Dendritic cell treated with granulocyte-macrophage colony-stimulating factor and Interleukin-4, amounts not matched to agents 40 ng/mL and 50 ng/mL, for 4 days (primary cell): ENCODE measurements at regions of chr6 and their contacts with region 1.

Region 1: DNA sequence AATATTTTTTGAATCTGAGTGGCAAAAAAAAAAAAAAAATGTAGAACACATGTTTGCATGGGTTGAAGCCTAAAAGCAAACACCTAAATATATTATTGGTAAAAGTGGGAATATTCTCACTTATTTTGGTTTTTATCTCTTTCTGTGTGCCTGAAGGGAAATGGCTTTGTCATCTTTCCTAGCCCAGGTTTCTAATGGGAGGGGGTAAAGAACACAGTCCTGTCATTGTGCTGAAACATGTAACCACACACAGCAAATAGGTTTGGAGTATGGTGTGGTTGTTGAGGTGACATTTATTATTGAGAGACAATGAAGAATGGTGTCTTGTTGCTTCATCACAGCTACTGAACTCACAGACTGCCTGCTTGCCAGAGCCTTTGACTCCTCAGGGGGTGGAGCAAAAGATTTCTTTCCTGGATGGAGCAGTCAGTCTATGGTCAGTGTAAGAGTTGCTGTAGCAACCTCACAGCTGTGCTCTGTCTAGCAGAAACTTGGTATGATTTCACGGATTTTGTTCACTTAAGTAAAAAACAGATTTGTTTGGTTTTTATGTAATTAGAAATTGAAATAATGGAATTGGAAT is 70.2 kb downstream of the CEP57L1 start:
- H3K4me3 Mint-ChIP-seq: no peak overlapping the region
- H3K27ac Mint-ChIP-seq: no peak overlapping the region
- H3K4me1 Mint-ChIP-seq: peaks cover 6% of the 10 kb centered on the region
- H3K27me3 Mint-ChIP-seq: no peaks in the 10 kb centered on the region

Region 2: GRCh38 chr6:108359901-108360882 is 805.3 kb before region 1 on chr6:
- intact Hi-C with region 1: no loop called
- H3K4me3 Mint-ChIP-seq: no peak overlapping the region
- H3K27ac Mint-ChIP-seq: no peak overlapping the region
- H3K4me1 Mint-ChIP-seq: peaks cover 22% of the 10 kb centered on the region
- H3K27me3 Mint-ChIP-seq: no peaks in the 10 kb centered on the region

Region 3: GRCh38 chr6:109183109-109183650 is 17.7 kb after region 1 on chr6:
- intact Hi-C with region 1: no loop called
- H3K4me3 Mint-ChIP-seq: no peak overlapping the region
- H3K27ac Mint-ChIP-seq: no peak overlapping the region
- H3K4me1 Mint-ChIP-seq: no peaks in the 10 kb centered on the region
- H3K27me3 Mint-ChIP-seq: peaks cover 6% of the 10 kb centered on the region

Region 4: DNA sequence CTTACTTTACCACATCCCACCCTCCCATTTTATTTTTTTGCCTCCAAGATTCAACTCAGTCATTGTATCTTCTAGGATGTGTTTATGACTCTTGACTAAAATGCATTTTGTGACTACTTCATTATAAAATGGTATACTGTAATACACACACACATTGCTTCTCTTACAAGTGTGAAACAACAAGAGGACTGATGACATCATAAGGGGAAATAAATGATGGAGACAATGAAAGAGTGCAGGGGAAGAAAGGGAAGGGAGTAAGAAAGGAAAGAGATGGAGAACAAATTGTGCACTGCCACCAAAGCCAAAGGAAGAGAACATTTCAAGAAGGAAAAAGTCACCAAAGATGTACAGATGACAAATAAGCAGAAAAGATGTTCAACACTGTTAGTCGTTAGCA is 114.1 kb after region 1 on chr6:
- intact Hi-C with region 1: no loop called
- H3K4me3 Mint-ChIP-seq: no peak overlapping the region
- H3K27ac Mint-ChIP-seq: no peak overlapping the region
- H3K4me1 Mint-ChIP-seq: peaks cover 21% of the 10 kb centered on the region
- H3K27me3 Mint-ChIP-seq: no peaks in the 10 kb centered on the region

Region 5: DNA sequence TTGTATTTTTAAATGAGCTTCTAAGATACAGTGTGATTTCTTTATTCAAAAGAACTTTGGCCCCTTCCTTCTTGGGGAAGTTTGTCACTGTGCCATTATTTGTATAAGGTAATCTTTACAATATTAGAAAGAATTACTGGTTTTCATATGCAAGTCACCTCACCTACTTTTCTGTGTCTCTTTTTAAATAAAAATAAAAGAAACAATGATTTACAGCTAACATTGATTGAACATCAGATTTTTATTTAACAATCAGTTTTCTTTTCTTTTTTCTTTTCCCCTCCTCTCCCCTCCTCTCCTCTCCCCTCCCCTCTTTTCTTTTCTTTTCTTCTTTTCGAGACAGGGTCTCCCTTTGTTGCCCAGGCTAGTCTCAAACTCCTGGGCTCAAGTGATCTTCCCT is 1060.8 kb after region 1 on chr6:
- intact Hi-C with region 1: loop called (anchors 5 kb)
- H3K4me3 Mint-ChIP-seq: no peak overlapping the region
- H3K27ac Mint-ChIP-seq: no peak overlapping the region
- H3K4me1 Mint-ChIP-seq: no peaks in the 10 kb centered on the region
- H3K27me3 Mint-ChIP-seq: no peaks in the 10 kb centered on the region